ENCODE measurements at regions of chr1 and their contacts with region 1.

Region 1: DNA sequence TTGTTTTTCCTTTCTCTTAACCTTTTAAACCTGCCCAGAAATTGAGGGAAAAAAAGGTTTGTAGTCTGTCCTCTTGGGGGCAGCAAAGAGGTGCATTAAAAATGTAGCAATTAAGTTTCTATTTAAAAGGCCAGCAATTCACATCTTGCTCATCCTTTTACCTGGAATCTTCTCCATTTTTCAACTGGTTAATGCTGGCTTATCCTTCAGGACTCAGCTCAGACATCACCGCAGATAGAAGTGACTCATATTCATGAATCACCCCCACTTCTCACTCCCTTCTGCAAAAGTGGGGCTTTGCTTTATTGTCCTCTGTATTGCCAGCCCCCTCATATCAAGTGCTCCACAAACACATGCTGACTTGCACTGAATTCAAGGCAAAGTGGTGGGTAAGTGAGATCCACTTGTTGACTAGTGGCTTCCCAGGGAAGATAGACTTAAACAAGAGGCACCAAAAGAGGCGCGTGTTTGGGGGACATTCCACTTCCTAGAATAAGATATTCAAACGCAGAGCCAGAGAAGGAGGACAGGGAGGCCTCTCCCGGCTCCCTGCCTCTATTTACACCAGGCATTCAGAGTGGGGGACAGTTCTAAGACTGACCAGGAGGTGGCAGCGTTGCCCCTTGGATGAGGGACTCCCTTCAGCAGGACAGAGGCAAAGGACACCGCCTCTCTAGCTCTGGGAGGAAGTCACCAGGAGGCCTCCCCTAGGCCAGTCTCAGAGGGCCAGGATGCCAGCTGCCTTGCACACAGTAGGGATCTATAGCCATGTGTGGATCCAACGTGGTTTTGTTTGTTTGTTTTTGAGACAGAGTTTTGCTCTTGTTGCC is 23.2 kb upstream of the ZNF648 start:
- DNase-seq: peak; percentile 67
- ATAC-seq: peak; percentile 96
- H3K4me3 ChIP-seq: no peak overlapping the region
- H3K27ac ChIP-seq: no peak overlapping the region
- H3K4me1 ChIP-seq: peaks cover 0 to 6% of the 10 kb centered on the region in 2 experiments; a peak in 1 of 4 replicates
- H3K27me3 ChIP-seq: no peaks in the 10 kb centered on the region
- CTCF ChIP-seq: peak; percentile 78 to 92 (median 83)
- POLR2A ChIP-seq: no peak
- RAD21 ChIP-seq: peak; percentile 98

Region 2: GRCh38 chr1:181479137-181479745 is 605.5 kb before region 1 on chr1:
- CTCF ChIA-PET with region 1: interaction called, 32 read pairs
- POLR2A ChIA-PET with region 1: no interaction called
- RAD21 ChIA-PET with region 1: interaction called, 4 to 8 read pairs
- intact Hi-C with region 1: loop called (anchors 1 kb)
- DNase-seq: peak; percentile 59
- ATAC-seq: peak; percentile 95
- H3K4me3 ChIP-seq: no peak overlapping the region
- H3K27ac ChIP-seq: no peak overlapping the region
- H3K4me1 ChIP-seq: no peaks in the 10 kb centered on the region
- H3K27me3 ChIP-seq: peaks cover 40% of the 10 kb centered on the region
- CTCF ChIP-seq: peak; percentile 81 to 89 (median 84)
- POLR2A ChIP-seq: no peak
- RAD21 ChIP-seq: peak; percentile 87

Region 3: GRCh38 chr1:182054698-182055326 is 29.9 kb before region 1 on chr1:
- CTCF ChIA-PET with region 1: interaction called, 10 read pairs
- POLR2A ChIA-PET with region 1: interaction called, 4 read pairs
- RAD21 ChIA-PET with region 1: no interaction called
- intact Hi-C with region 1: no loop called
- DNase-seq: peak; percentile 26
- ATAC-seq: peak; percentile 84
- H3K4me3 ChIP-seq: no peak overlapping the region
- H3K27ac ChIP-seq: no peak overlapping the region
- H3K4me1 ChIP-seq: no peaks in the 10 kb centered on the region
- H3K27me3 ChIP-seq: no peaks in the 10 kb centered on the region
- CTCF ChIP-seq: peak; percentile 51 to 68 (median 60); a peak in 5 of 6 replicates
- POLR2A ChIP-seq: no peak
- RAD21 ChIP-seq: peak; percentile 70

Region 4: GRCh38 chr1:182143154-182143657 is 58.5 kb after region 1 on chr1:
- CTCF ChIA-PET with region 1: interaction called, 17 read pairs
- POLR2A ChIA-PET with region 1: no interaction called
- RAD21 ChIA-PET with region 1: interaction called, 4 to 6 read pairs
- intact Hi-C with region 1: loop called (anchors 2 kb)
- DNase-seq: peak; percentile 58
- ATAC-seq: peak; percentile 95
- H3K4me3 ChIP-seq: no peak overlapping the region
- H3K27ac ChIP-seq: no peak overlapping the region
- H3K4me1 ChIP-seq: no peaks in the 10 kb centered on the region
- H3K27me3 ChIP-seq: no peaks in the 10 kb centered on the region
- CTCF ChIP-seq: peak; percentile 86 to 97 (median 92)
- POLR2A ChIP-seq: no peak
- RAD21 ChIP-seq: peak; percentile 97

Region 5: DNA sequence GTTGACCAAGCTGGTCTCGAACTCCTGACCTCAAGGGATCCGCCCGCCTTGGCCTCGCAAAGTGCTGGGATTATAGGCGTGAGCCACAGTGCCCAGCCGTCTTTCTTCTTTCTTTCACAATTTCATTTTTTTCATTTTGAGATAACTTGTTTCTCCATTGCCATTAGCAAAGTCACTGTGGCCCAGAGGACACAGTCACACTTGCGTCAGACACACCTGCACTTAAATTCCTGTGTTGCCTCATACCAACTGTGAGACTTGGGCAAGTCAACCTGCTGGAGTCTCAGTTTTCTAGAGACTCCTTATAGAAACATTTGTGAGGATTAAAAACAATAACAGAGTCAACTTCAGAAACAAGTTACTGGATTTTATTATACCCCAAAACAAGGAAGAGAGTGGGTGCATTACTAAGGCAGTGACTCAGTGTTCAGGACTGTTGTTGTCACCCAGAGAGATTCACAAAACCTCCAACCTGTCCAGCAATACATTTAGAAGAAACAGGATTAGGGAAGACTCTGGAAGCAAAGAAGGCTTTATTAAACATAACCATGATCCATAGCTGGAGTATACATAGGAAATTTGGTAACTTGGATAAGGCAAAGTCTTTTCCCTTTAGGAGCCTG is 313.2 kb after region 1 on chr1:
- CTCF ChIA-PET with region 1: interaction called, 31 read pairs
- POLR2A ChIA-PET with region 1: no interaction called
- RAD21 ChIA-PET with region 1: interaction called, 6 to 8 read pairs
- intact Hi-C with region 1: loop called (anchors 1 kb)
- DNase-seq: no peak
- ATAC-seq: no peak
- H3K4me3 ChIP-seq: no peak overlapping the region
- H3K27ac ChIP-seq: no peak overlapping the region
- H3K4me1 ChIP-seq: peaks cover 3 to 15% of the 10 kb centered on the region in 2 experiments; a peak in 3 of 4 replicates
- H3K27me3 ChIP-seq: no peaks in the 10 kb centered on the region
- CTCF ChIP-seq: no peak
- POLR2A ChIP-seq: no peak
- RAD21 ChIP-seq: no peak

Region 6: GRCh38 chr1:182595641-182596240 is 511.0 kb after region 1 on chr1:
- CTCF ChIA-PET with region 1: interaction called, 11 read pairs
- POLR2A ChIA-PET with region 1: no interaction called
- RAD21 ChIA-PET with region 1: interaction called in 1 of 2 experiments, 3 read pairs
- intact Hi-C with region 1: loop called (anchors 2 kb)
- DNase-seq: peak; percentile 43
- ATAC-seq: peak; percentile 86
- H3K4me3 ChIP-seq: no peak overlapping the region
- H3K27ac ChIP-seq: no peak overlapping the region
- H3K4me1 ChIP-seq: no peaks in the 10 kb centered on the region
- H3K27me3 ChIP-seq: no peaks in the 10 kb centered on the region
- CTCF ChIP-seq: peak; percentile 78 to 93 (median 92)
- POLR2A ChIP-seq: no peak
- RAD21 ChIP-seq: peak; percentile 80

Region 7: DNA sequence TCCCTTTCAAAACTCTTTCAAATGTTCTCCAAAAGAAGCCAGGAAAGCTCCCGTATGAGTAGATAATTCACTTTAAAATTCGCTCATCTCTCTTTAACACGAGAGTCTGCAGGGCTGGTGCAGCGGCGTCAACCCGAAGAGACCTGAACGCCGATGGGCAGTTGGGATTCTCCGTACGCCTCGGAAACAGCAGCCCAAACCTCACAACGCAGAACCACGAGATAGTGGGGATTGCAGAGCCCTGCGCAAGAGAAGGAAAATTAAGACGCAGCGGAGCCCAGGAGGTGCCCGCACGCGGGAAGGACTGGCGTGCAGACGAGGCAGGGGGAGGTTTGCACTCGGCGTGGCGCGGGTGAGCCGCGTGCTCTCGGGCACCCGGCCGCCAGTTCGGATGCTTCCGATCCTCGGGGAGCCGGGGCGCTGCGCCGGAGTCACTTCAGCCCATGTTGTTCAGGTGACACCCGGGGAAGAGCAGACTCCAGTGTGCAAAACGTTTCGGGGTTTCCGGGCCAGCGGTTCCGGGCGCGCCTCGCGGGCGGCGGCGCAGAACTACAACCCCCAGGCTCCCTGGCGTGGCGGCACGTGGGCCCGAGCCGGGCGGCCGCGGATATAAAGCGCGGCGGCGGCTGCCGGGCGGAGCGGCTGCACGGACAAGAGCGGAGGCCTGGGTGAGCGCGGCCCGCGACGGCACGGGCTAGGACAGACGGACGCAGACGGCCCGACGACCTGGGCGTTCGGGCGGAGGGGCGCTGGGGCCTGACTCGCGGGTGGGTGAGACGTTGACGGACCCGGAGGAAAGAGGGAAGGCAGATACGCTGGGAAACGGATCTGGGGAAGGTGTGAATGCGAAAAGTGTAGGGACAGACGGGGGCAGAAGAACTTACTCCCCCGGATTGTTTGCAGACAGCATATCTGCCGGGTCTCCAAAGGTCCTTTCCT is 704.7 kb after region 1 on chr1 and contains the start of gene NPL:
- CTCF ChIA-PET with region 1: interaction called, 5 read pairs
- POLR2A ChIA-PET with region 1: no interaction called
- RAD21 ChIA-PET with region 1: no interaction called
- intact Hi-C with region 1: loop called (anchors 1 kb)
- DNase-seq: no peak
- ATAC-seq: peak; percentile 54
- H3K4me3 ChIP-seq: no peak within 1 kb of the TSS
- H3K27ac ChIP-seq: no peak within 1 kb of the TSS
- H3K4me1 ChIP-seq: no peaks in the 10 kb centered on the region
- H3K27me3 ChIP-seq: peaks cover 10% of the 10 kb centered on the region
- CTCF ChIP-seq: no peak
- POLR2A ChIP-seq: no peak
- RAD21 ChIP-seq: no peak
- total RNA-seq, gene NPL: 0.39 TPM

Measured in HCT116 (cell line).